ENCODE measurements at regions of chr2 and their contacts with region 1.

Region 1: DNA sequence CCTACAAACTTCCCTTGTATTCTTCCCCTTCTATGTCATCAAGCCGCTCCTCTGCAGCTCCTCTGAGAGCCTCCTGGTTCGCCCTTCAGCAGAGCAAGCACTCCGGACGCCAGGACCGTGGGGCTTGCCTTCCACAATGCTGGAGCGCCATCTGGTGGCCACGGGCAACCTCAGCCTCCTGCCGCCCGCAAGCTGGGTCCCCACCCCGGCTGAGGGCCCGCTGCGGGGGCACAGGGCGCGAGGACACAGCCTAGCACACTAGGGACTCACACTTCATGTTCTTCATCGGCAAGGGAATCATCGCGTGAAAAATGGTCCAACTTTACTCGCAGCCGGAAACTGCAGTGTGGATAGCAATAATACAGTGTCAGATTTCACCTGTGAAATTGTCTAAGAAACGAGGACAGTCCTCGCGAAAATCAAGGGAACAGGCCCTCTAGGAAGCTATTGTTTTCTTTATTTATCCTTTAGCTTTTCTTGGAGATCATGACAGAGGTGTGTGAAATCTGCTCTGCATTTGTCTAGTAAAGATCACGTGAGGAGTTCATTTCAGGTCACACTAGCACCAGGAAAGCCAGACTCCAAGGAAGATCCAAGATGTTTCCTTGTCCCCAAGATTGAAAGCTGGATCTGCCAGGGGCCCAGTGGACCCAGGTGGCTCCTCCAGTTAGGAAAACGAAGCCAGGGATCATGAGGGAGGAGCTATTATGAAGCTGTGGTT is 5.8 kb downstream of the PRLH start:
- DNase-seq: peak; percentile 90
- H3K27ac ChIP-seq: peak overlapping the region; percentile 96
- CTCF ChIP-seq: peak; percentile 95

Region 2: GRCh38 chr2:237421542-237422116 is 150.6 kb before region 1 on chr2:
- CTCF ChIA-PET with region 1: interaction called, 20 read pairs
- POLR2A ChIA-PET with region 1: no interaction called
- DNase-seq: peak; percentile 71
- H3K27ac ChIP-seq: no peak overlapping the region
- CTCF ChIP-seq: peak; percentile 71

Region 3: GRCh38 chr2:237474931-237475703 is 97.1 kb before region 1 on chr2:
- CTCF ChIA-PET with region 1: interaction called, 14 read pairs
- POLR2A ChIA-PET with region 1: no interaction called
- DNase-seq: peak; percentile 79
- H3K27ac ChIP-seq: peak overlapping the region; percentile 85
- CTCF ChIP-seq: peak; percentile 92

Region 4: GRCh38 chr2:237512774-237513466 is 59.3 kb before region 1 on chr2:
- CTCF ChIA-PET with region 1: interaction called, 112 read pairs
- POLR2A ChIA-PET with region 1: no interaction called
- DNase-seq: peak; percentile 86
- H3K27ac ChIP-seq: peak overlapping the region; percentile 43; the same call in 1 of the 2 replicates
- CTCF ChIP-seq: peak; percentile 86

Region 5: DNA sequence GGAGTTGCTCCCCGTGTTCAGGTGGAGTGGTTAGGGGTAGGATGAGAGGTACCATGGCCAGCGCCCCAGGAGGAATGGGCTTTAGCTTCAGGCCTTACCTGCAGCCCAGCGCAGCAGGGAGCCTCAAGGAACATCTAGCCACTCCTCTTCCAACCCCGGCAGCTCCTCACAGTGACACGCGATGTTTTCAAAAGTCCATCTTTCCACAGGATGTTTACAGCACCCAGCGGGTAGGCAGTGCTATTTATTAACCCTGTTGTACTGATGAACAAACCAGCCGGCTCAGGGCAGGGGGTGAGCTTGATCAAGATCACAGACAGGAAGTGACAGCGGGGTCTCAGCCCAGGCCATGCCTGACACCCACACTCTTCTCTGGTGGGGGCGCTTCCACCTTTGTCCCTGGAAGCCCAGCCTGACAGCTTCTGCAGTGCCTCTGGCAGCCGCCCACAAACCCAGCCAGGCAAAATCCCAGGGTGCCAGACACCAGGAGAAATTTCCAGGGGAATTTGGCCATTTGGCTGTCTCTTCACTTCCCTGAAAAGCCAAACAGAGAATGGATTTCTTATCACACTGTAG is 24.3 kb before region 1 on chr2:
- CTCF ChIA-PET with region 1: interaction called, 11 read pairs
- POLR2A ChIA-PET with region 1: no interaction called
- DNase-seq: no peak
- H3K27ac ChIP-seq: 0 out of 2 replicates have a peak overlapping the region, but pooled peaks have one; percentile 3
- CTCF ChIP-seq: no peak

Region 6: DNA sequence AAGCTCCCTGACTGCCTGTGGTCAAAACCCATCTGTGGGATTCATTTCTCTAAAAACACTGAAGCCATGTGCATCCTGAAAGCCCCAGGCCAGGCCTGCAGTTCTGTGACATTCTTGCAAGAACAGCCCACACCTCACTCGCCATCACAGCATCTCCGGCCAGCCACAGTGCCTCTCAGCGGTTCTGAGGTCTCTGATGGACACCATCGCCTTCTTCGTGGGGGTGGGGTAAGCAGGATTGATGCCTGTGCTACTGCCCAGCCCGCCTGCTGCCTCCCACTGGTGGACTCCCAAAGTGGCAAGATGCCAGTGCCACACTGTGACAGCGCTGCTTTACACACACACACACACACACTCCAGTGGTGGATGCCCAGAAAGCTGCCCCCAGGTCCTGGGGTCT is 11.0 kb before region 1 on chr2:
- CTCF ChIA-PET with region 1: interaction called, 13 read pairs
- POLR2A ChIA-PET with region 1: no interaction called
- DNase-seq: no peak
- H3K27ac ChIP-seq: no peak overlapping the region
- CTCF ChIP-seq: no peak